ENCODE measurements at regions of chr4 and their contacts with region 1.

Region 1: GRCh38 chr4:100609810-100610209 is 92.0 kb upstream of the EMCN start:
- DNase-seq: no peak
- H3K4me3 Mint-ChIP-seq: no peak overlapping the region
- H3K27ac Mint-ChIP-seq: no peak overlapping the region
- H3K4me1 Mint-ChIP-seq: no peaks in the 10 kb centered on the region
- H3K27me3 Mint-ChIP-seq: no peaks in the 10 kb centered on the region
- CTCF ChIP-seq: no peak

Region 2: GRCh38 chr4:101103381-101104142 is 493.8 kb after region 1 on chr4:
- CTCF ChIA-PET with region 1: no interaction called
- intact Hi-C with region 1: loop called (anchors 5 kb)
- DNase-seq: no peak
- H3K4me3 Mint-ChIP-seq: no peak overlapping the region
- H3K27ac Mint-ChIP-seq: no peak overlapping the region
- H3K4me1 Mint-ChIP-seq: peaks cover 9% of the 10 kb centered on the region
- H3K27me3 Mint-ChIP-seq: no peaks in the 10 kb centered on the region
- CTCF ChIP-seq: no peak

Measured in Calu3 (cell line).